GM18951 (cell line): ENCODE measurements at regions of chr9 and their contacts with region 1.

Region 1: DNA sequence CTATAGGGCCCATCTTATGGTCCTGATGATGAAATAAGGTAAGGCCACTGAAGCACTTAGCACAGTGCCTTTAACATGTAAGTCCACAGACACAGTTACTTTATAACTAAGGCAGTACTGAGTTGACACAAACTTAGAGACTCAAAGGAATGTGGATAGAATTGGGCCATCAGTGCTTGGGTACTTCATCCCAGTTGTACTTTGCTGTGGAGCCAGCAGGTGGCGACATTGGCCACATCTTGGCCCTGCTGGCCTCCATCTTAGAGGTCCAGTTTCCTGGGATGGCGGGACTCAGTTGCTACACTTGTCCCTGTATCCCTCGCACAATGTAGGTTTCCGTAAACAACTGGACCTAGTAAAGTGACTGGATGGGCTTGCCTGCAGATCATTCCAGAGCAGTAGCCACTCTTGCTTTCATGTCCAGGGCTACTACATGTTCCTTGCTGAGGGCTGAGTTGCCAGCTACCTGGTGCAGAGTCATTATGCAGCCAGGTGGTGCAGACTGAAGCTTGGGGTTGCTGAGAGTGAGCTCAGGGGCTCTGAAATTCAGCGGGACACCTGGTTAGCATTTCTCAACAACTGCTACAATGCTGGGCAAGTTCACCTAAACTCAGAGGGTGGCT is 10.6 kb downstream of the MTAP start:
- POLR2A ChIP-seq: no peak

Region 2: DNA sequence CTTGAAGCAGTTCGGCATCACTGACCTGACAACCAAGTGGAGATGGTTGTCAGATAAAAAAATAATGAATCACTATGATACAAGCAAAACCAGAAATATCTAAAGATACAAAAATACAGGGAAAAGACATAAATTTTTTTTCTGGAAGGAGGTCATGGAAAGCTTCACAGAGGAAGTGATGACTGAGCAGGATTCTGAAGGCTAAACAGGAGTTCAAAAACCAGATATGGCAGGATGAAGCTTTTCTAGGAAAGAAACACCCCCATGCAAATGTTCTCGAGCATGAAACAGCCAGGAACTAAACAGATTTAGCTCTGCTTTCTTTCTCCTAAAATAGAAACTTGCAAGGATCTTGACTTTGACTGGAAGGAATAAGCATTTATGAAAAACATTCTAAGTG is 270.3 kb before region 1 on chr9:
- in situ Hi-C with region 1: no loop called
- POLR2A ChIP-seq: no peak

Region 3: GRCh38 chr9:22026696-22027095 is 213.6 kb after region 1 on chr9:
- in situ Hi-C with region 1: loop called (anchors 10 kb)
- POLR2A ChIP-seq: no peak

Region 4: DNA sequence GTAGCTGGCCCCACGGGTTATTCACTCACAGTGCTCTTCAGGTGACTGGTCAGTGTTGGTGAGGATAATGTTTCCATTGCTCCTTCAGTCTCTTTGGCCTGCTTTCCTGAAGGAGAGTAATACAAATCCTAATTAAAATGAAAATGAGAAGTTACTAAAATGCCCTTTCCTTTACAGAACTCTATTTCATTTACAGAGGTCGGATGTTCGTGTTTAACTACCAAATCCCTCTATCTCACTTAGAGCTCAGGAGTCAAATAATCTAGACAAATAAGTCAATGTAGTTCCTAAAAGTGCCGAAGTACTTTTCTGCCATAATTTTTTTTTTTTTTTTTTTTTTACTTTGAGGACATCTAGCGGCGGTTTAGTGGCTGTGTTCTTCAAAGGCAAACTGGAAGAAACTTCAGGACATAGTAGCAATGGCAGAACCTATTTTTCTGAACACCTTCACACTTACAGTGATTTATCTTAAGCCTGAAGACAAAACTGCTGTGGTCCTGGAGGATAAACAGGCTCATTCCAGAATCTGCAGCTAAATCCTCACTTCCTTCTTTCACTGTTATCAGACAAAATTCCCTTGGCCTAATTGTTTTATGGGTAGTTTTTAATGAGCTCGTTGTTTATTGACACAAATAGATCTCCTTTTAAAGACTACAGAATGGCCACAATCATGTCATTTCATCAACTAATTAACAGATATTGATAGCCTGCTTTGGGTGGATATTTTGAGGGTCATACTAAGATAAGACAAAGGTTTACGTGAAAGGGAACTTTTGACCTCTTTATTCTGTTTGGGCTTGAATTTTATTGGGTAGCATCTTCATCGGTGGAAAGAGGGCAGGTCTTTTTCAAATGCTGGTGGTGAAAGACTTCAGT is 426.0 kb after region 1 on chr9:
- in situ Hi-C with region 1: loop called (anchors 10 kb)
- POLR2A ChIP-seq: no peak

Region 5: DNA sequence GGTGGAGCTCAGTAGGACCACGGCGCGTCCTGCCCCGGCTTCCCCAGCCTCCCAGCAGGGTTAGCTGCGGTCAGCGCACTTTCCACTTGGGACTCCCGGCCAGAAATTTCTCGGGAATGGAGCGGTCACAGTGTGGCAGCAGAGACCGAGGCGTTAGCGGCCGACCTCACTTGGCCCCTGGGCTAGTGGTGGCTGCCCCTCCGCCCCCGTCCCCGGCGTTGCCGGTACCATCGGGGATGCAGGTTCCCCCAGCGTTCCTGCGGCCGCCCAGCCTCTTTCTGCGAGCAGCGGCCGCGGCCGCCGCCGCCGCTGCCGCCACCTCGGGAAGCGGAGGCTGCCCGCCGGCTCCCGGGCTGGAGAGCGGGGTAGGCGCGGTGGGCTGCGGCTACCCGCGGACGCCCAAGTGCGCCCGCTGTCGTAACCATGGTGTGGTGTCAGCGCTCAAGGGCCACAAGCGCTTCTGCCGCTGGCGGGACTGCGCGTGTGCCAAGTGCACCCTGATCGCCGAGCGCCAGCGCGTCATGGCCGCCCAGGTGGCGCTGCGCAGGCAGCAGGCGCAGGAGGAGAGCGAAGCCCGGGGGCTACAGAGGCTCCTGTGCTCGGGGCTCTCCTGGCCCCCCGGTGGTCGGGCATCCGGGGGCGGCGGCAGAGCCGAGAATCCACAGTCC is 634.0 kb after region 1 on chr9:
- in situ Hi-C with region 1: loop called (anchors 10 kb)
- POLR2A ChIP-seq: no peak